ENCODE measurements at regions of chr17 and their contacts with region 1.

Region 1: GRCh38 chr17:27544350-27545131 is 86.4 kb upstream of the LGALS9 start:
- DNase-seq: peak; percentile 70
- ATAC-seq: peak; percentile 84
- H3K4me3 ChIP-seq: no peak overlapping the region
- H3K4me3 Mint-ChIP-seq: peak overlapping the region; percentile 75
- H3K27ac ChIP-seq: peak overlapping the region; percentile 6 to 28
- H3K27ac Mint-ChIP-seq: peak overlapping the region; percentile 87
- H3K4me1 ChIP-seq: peaks cover 58 to 65% of the 10 kb centered on the region in 2 donors
- H3K4me1 Mint-ChIP-seq: peaks cover 72% of the 10 kb centered on the region
- H3K27me3 ChIP-seq: no peaks in the 10 kb centered on the region
- H3K27me3 Mint-ChIP-seq: no peaks in the 10 kb centered on the region
- CTCF ChIP-seq: no peak

Region 2: DNA sequence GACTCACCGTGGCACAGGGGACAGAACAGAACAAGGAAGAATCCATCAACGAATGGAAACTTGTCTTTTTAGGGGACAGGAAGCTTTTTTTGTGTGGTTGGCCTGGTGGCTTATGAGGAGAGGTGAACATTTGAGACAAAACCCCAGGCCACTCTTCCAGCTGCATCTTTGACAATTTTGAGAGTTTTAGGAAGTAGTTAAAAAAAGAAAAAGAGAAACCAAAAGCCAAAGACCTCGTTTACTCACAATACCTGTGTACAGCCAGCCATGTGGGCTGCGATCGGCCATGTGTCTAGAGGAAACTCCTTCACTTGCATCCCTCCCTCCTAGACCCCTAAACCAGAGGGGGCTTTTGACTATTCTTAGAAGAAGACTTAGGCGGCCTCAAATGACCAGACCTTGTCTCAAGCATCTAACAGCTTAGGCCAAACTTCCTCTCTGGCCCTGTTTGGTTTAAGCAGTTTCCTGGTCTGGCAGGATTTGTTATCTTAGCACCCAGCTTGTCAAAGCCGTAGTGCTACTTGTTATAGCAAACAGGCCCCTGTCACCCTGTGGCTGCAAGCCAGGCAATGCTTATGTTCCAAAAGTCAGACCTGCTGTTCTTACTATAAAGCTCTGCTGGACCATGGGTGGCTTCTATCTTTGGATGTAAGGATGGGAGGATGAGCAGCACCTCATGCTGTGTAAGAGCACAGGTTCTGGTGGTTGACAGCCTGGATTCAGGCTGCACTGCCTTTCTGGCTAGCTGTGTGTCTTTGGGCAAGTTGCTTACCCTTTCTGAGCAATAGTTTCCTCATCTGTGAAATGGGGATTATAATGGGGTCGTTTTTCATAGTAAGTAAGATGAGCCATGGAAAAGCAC is 70.6 kb before region 1 on chr17:
- CTCF ChIA-PET with region 1: no interaction called
- POLR2A ChIA-PET with region 1: no interaction called
- intact Hi-C with region 1: loop called (anchors 5 kb)
- DNase-seq: peak; percentile 71
- ATAC-seq: no peak
- H3K4me3 ChIP-seq: peak overlapping the region in 4 of 5 experiments; percentile 13 to 38 (median 20)
- H3K4me3 Mint-ChIP-seq: peak overlapping the region; percentile 81
- H3K27ac ChIP-seq: peak overlapping the region; percentile 80 to 89
- H3K27ac Mint-ChIP-seq: peak overlapping the region; percentile 92
- H3K4me1 ChIP-seq: peaks cover 35 to 63% of the 10 kb centered on the region in 2 donors
- H3K4me1 Mint-ChIP-seq: peaks cover 69% of the 10 kb centered on the region
- H3K27me3 ChIP-seq: no peaks in the 10 kb centered on the region
- H3K27me3 Mint-ChIP-seq: no peaks in the 10 kb centered on the region
- CTCF ChIP-seq: no peak

Region 3: DNA sequence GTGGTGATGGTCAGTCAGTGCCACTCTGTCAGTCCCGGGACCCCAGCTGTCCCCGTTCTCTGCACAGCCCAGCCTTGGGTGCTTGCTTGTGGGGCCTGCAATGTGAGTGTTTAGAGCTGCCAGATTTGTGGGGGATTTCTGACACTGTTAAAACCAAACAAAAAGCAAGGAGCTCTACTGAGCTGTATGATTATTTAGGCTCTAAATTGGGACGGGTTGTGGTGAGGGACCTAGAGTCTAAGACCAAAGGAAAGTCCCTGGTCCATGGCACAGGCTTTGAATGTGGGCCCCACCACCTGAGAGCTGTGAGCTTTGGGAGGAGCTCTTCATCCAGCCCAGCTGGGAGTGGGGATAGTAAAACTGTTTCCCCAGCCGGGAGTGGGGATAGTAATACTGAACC is 25.0 kb before region 1 on chr17:
- CTCF ChIA-PET with region 1: no interaction called
- POLR2A ChIA-PET with region 1: no interaction called
- intact Hi-C with region 1: no loop called
- DNase-seq: no peak
- ATAC-seq: no peak
- H3K4me3 ChIP-seq: no peak overlapping the region
- H3K4me3 Mint-ChIP-seq: no peak overlapping the region
- H3K27ac ChIP-seq: no peak overlapping the region
- H3K27ac Mint-ChIP-seq: no peak overlapping the region
- H3K4me1 ChIP-seq: no peaks in the 10 kb centered on the region
- H3K4me1 Mint-ChIP-seq: peaks cover 18% of the 10 kb centered on the region
- H3K27me3 ChIP-seq: no peaks in the 10 kb centered on the region
- H3K27me3 Mint-ChIP-seq: no peaks in the 10 kb centered on the region
- CTCF ChIP-seq: no peak